Activated CD4-positive, alpha-beta T cell treated with anti-CD3 and anti-CD28 coated beads for 36 hours (primary cell): ENCODE measurements at regions of chr3 and their contacts with region 1.

Region 1: GRCh38 chr3:94011233-94011711 is 17.1 kb downstream of the STX19 start:
- DNase-seq: no peak
- ATAC-seq: peak; percentile 92
- H3K4me3 Mint-ChIP-seq: peak overlapping the region; percentile 8
- H3K27ac Mint-ChIP-seq: peak overlapping the region; percentile 56
- H3K4me1 Mint-ChIP-seq: peaks cover 43% of the 10 kb centered on the region
- H3K27me3 Mint-ChIP-seq: no peaks in the 10 kb centered on the region

Region 2: GRCh38 chr3:94043285-94043684 is 32.0 kb after region 1 on chr3:
- CTCF ChIA-PET with region 1: interaction called, 4 read pairs
- POLR2A ChIA-PET with region 1: no interaction called
- intact Hi-C with region 1: loop called in 1 of 2 experiments (anchors 2 kb)
- DNase-seq: no peak
- ATAC-seq: no peak
- H3K4me3 Mint-ChIP-seq: no peak overlapping the region
- H3K27ac Mint-ChIP-seq: no peak overlapping the region
- H3K4me1 Mint-ChIP-seq: peaks cover 2% of the 10 kb centered on the region
- H3K27me3 Mint-ChIP-seq: no peaks in the 10 kb centered on the region

Region 3: DNA sequence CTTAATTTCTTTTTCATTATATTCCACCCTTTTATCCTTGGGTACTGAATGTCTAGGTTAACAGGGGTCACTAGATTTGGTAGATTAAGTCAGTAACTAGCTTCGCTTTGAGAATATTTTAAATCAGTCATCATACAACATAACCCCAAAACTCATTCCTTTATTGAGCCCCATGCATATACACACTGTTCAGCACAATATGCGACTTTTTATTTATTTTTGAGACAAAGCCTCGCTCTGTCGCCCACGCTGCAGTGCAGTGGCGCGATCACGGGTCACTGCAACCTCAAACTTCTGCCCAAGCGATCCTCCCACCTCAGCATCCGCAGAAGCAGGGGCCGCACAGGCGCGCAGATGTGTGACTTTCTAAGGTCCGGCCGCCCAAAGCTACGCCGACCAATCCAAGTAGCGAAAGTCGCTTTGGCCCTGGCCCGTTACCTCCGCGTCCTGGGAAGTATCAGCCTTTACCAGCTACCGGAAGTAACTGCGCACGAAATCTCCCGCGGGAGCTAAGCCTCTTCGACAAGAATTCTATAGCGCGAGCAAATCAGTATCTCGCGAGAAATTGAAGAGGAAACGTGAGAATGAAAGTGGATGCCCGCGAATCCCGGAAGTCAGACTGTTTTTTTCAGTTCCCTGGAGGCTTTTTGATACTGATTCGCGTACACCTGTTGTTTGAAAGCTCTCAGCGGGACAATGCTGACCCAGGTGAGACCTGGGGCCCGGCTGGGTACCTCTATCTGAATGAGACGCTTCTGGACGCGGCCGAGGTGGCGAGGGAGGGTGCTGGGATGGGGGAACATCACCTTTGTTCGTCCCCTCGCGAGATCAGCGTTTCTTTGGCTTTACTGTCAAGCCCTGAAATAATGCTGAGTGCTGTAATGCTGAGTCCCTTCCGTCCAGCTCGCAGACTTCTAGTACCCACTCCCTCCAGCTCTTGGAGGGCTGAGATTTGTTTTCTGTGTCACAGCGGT is 51.4 kb after region 1 on chr3 and contains the starts of genes DHFR2 and NSUN3:
- CTCF ChIA-PET with region 1: interaction called, 4 read pairs
- POLR2A ChIA-PET with region 1: no interaction called
- intact Hi-C with region 1: loop called (anchors 1 kb)
- DNase-seq: peak; percentile 88
- ATAC-seq: peak; percentile 87
- H3K4me3 Mint-ChIP-seq: peak within 1 kb of the TSS; percentile 92
- H3K27ac Mint-ChIP-seq: peak within 1 kb of the TSS; percentile 99
- H3K4me1 Mint-ChIP-seq: peaks cover 43% of the 10 kb centered on the region
- H3K27me3 Mint-ChIP-seq: no peaks in the 10 kb centered on the region
- total RNA-seq, gene DHFR2: 7.4 to 10.3 TPM
- total RNA-seq, gene NSUN3: 15.4 to 17.1 TPM

Region 4: GRCh38 chr3:94069194-94069813 is 58.0 kb after region 1 on chr3:
- CTCF ChIA-PET with region 1: interaction called, 14 read pairs
- POLR2A ChIA-PET with region 1: no interaction called
- intact Hi-C with region 1: loop called in 1 of 2 experiments (anchors 1 kb)
- DNase-seq: no peak
- ATAC-seq: no peak
- H3K4me3 Mint-ChIP-seq: no peak overlapping the region
- H3K27ac Mint-ChIP-seq: no peak overlapping the region
- H3K4me1 Mint-ChIP-seq: peaks cover 77% of the 10 kb centered on the region
- H3K27me3 Mint-ChIP-seq: no peaks in the 10 kb centered on the region